PC-3 (cell line): ENCODE measurements at regions of chr1 and their contacts with region 1.

Region 1: GRCh38 chr1:23263380-23263887 is 46.1 kb upstream of the HTR1D start:
- DNase-seq: no peak
- ATAC-seq: no peak
- H3K4me3 ChIP-seq: no peak overlapping the region
- H3K27ac ChIP-seq: no peak overlapping the region
- H3K4me1 ChIP-seq: no peaks in the 10 kb centered on the region
- H3K27me3 ChIP-seq: no peaks in the 10 kb centered on the region
- CTCF ChIP-seq: no peak

Region 2: DNA sequence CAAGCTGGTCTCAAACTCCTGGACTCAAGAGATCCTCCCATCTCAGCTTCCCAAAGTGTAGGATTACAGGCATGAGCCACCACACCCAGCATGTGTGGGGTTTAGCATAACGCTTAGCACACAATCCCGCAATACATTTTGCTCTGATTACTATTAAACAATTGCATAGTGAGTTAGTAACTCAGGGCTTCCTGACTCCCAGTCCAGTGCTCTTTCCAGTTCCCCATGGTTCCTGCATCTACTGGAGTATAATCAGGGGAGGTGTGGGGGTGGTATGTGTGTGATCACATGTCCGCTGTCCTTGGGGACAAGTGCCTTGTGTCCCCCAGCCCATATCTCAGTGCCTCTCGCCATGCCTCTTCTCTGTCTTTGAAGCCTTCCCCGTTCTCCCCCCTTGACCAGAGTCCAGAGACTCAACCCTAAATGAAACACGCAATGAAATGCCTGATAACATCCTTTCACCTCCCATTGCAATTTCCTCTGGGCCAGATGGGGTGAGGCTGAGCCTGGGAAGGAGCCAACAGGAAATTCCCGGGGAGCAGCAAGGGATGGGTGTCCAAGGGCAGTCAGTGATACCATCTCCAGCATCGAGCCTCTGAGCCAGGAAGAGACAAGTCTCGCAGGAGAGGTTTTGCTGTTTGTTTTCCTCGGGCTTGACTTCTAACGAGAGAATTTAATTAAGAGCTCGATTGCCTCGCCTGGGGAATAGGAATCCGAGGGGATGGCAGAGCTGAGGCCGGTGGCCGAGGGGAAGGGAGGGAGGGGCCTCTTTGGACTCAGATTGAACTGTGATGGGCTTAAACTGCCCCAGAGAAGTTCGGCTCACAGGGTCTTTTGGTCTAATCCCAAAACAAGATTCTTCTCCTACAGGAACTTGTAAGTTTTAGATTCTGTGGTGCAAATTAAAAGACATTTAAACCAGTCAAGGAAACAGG is 38.5 kb before region 1 on chr1:
- CTCF ChIA-PET with region 1: no interaction called
- POLR2A ChIA-PET with region 1: no interaction called
- intact Hi-C with region 1: loop called (anchors 5 kb)
- DNase-seq: no peak
- ATAC-seq: peak; percentile 58
- H3K4me3 ChIP-seq: no peak overlapping the region
- H3K27ac ChIP-seq: no peak overlapping the region
- H3K4me1 ChIP-seq: no peaks in the 10 kb centered on the region
- H3K27me3 ChIP-seq: no peaks in the 10 kb centered on the region
- CTCF ChIP-seq: no peak